ENCODE measurements at regions of chr17 and their contacts with region 1.

Region 1: GRCh38 chr17:48816774-48817590 is at the start of gene TTLL6:
- DNase-seq: peak; percentile 32 to 87 (median 78)
- ATAC-seq: peak; percentile 96
- H3K4me3 ChIP-seq: peak within 1 kb of the TSS; percentile 43 to 64
- H3K4me3 Mint-ChIP-seq: peak within 1 kb of the TSS; percentile 71 to 82 (median 73)
- H3K27ac ChIP-seq: no peak within 1 kb of the TSS
- H3K27ac Mint-ChIP-seq: no peak within 1 kb of the TSS
- H3K4me1 ChIP-seq: peaks cover 2 to 22% of the 10 kb centered on the region in 2 experiments
- H3K4me1 Mint-ChIP-seq: peaks cover 11 to 22% (median 18%) of the 10 kb centered on the region in 3 donors
- H3K27me3 ChIP-seq: peaks cover 2 to 67% of the 10 kb centered on the region in 2 experiments
- H3K27me3 Mint-ChIP-seq: peaks cover 7 to 38% of the 10 kb centered on the region in 2 donors
- total RNA-seq, gene TTLL6: not detected

Region 2: DNA sequence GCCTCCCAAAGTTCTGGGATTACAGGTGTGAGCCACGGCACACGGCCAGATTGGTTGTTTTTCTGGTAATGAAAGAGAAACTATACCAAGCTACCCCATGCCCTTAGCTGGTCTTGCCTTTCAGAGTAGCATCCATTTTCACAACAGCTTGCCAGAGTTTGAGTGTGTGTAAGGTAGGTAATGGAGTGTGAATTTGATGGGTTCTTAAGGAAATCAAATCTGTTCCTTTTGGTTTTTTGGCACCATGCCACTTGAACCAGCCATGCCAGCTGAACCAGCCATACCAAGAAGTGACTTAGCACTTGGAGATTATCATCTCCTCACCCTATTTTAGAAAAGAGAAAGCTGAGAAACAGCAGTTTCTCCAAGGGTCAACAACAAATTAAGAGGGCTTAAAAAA is 19.0 kb after region 1 on chr17:
- CTCF ChIA-PET with region 1: interaction called, 3 to 11 read pairs
- POLR2A ChIA-PET with region 1: interaction called in 1 of 2 experiments, 11 read pairs
- DNase-seq: peak in 2 of 35 experiments; percentile 5 to 37
- ATAC-seq: no peak
- H3K4me3 ChIP-seq: no peak overlapping the region
- H3K4me3 Mint-ChIP-seq: peak overlapping the region in 1 of 3 donors; percentile 72
- H3K27ac ChIP-seq: no peak overlapping the region
- H3K27ac Mint-ChIP-seq: peak overlapping the region in 1 of 2 donors; percentile 11
- H3K4me1 ChIP-seq: peaks cover 58 to 79% of the 10 kb centered on the region in 2 experiments
- H3K4me1 Mint-ChIP-seq: peaks cover 85 to 95% (median 91%) of the 10 kb centered on the region in 3 donors
- H3K27me3 ChIP-seq: peaks cover 0 to 2% of the 10 kb centered on the region in 2 experiments
- H3K27me3 Mint-ChIP-seq: no peaks in the 10 kb centered on the region

Region 3: DNA sequence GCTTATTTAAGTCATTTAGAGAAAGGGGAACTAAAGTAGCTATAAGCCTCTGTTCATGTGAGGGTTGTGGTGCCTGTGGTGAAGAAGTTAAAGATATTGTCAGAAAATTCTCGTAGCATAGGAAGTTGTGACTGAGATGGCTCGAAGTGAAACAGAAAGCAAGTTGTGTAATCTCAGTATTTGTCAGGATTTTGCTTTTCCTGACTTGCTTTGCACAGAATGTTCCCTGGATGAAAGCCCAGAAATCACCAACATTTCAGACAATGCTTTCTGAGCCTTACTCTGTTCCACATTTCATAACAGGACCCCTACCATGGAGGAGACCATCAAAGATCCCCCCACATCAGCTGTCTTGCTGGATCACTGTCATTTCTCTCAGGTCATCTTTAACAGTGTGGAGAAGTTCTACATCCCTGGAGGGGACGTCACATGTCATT is 24.4 kb after region 1 on chr17:
- CTCF ChIA-PET with region 1: interaction called, 11 to 15 read pairs
- POLR2A ChIA-PET with region 1: no interaction called
- DNase-seq: peak in 16 of 35 experiments; percentile 7 to 72 (median 22)
- ATAC-seq: peak; percentile 83 to 91 (median 89)
- H3K4me3 ChIP-seq: peak overlapping the region; percentile 22 to 38
- H3K4me3 Mint-ChIP-seq: peak overlapping the region; percentile 71 to 74 (median 72)
- H3K27ac ChIP-seq: peak overlapping the region; percentile 68
- H3K27ac Mint-ChIP-seq: peak overlapping the region; percentile 90 to 96
- H3K4me1 ChIP-seq: peaks cover 36 to 56% of the 10 kb centered on the region in 2 experiments
- H3K4me1 Mint-ChIP-seq: peaks cover 54 to 60% (median 54%) of the 10 kb centered on the region in 3 donors
- H3K27me3 ChIP-seq: peaks cover 0 to 2% of the 10 kb centered on the region in 2 experiments
- H3K27me3 Mint-ChIP-seq: no peaks in the 10 kb centered on the region

Measured in T-cell (primary cell).